CD14-positive monocyte (primary cell): ENCODE measurements at regions of chr22 and their contacts with region 1.

Region 1: GRCh38 chr22:38353142-38353629 is 36.0 kb upstream of the CSNK1E start:
- DNase-seq: peak; percentile 27 to 60 (median 58)
- H3K4me3 ChIP-seq: no peak overlapping the region
- H3K4me3 Mint-ChIP-seq: no peak overlapping the region
- H3K27ac ChIP-seq: no peak overlapping the region
- H3K27ac Mint-ChIP-seq: no peak overlapping the region
- H3K4me1 ChIP-seq: no peaks in the 10 kb centered on the region
- H3K4me1 Mint-ChIP-seq: no peaks in the 10 kb centered on the region
- H3K27me3 ChIP-seq: no peaks in the 10 kb centered on the region
- H3K27me3 Mint-ChIP-seq: peaks cover 5 to 10% (median 10%) of the 10 kb centered on the region in 3 donors
- CTCF ChIP-seq: peak; percentile 95

Region 2: DNA sequence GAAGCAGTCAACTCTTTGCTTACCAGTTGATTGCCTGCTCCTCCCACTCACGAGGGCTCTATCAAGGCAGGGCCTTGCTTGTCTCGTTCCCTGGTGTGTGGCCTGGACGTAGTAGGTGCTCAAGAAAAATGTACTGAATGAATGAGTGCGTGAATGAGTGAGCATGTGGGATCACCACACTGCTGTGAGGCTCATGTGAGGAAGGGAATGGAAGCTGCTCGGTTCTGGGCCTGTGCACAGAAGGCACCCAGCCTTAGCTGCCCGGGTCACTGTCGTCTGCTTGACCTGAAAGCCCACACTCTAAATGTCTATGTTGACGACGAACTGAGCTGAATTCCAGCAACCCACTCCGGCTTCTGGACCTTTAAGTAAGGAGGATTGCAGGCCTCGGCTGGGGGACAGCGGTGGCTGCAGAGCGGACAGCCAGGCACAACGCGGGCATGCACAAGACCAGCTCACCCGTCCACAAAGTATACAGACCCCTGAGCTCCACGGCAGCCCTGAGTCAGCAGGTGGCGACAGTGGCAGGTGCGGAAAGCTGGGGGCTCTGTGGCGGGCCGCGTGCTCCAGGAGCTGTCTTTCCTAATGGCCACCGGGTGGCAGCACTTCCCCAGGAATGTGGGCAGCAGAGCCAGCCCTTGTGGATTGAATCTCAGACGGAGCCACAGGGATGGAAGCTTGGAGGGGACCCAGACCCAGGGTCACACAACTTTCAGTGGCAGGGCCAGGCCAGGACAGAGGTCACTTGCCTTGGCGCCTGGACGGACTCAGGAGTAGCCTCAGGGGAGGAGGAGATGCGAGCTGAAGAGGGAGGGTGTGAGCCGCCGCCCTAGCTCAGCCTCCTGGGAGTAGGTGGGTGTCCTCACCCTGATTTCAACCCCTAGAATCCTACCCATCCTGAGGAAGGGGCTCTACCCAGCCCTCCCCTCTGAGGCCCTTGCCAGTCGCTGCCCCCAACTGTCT is 301.0 kb before region 1 on chr22:
- intact Hi-C with region 1: loop called (anchors 2 to 5 kb)
- DNase-seq: peak; percentile 60 to 75 (median 69)
- H3K4me3 ChIP-seq: no peak overlapping the region
- H3K4me3 Mint-ChIP-seq: no peak overlapping the region
- H3K27ac ChIP-seq: no peak overlapping the region
- H3K27ac Mint-ChIP-seq: no peak overlapping the region
- H3K4me1 ChIP-seq: peaks cover 9% of the 10 kb centered on the region in 2 donors
- H3K4me1 Mint-ChIP-seq: peaks cover 13% of the 10 kb centered on the region
- H3K27me3 ChIP-seq: peaks cover 0 to 3% of the 10 kb centered on the region in 2 donors
- H3K27me3 Mint-ChIP-seq: peaks cover 16 to 26% (median 19%) of the 10 kb centered on the region in 3 donors
- CTCF ChIP-seq: peak; percentile 94

Region 3: DNA sequence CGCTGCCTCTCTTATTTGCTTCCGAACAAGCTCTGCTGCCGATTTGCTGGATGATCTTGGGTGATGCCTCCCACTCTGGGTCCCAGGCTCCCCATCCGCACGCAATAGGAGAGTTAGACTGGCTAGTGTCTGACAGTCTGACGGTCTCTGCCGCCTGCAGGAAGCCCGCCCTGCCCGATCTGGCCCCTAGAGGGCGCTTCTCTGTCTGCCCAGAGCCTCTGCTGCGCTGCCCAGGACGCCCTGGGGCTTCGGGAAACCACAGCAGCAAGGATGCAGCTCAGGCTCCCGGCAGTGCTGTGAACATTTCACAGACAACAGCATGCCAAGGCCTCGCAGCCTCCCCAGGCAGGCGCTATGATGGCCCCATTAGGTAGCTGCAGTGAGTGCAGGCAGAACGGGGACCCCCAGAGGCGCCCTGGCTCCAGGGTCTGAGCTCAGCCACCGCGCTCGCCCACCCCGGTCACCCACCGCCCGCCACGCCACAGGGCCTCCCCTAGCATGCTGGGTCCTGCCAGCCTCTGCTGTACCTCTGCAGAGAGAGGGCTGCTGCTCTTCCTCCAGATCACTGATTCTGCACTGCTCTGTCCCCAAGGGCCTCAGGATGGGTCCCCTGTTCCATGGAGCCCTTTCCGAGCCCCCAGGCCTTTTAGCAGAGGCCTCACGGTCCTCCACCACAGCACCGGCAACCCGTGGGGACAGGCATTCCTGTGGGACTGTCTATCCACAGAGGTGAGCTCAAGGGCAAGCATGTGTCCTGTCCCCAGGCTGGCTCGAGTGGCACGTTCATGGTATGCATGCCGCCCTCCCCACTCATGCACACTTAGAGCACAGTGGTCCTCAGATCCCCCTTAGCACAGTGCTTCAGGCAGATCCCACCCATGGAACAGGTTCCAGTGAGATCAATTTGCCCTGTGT is 238.4 kb before region 1 on chr22:
- intact Hi-C with region 1: loop called (anchors 5 kb)
- DNase-seq: peak; percentile 67 to 77 (median 73)
- H3K4me3 ChIP-seq: no peak overlapping the region
- H3K4me3 Mint-ChIP-seq: no peak overlapping the region
- H3K27ac ChIP-seq: no peak overlapping the region
- H3K27ac Mint-ChIP-seq: no peak overlapping the region
- H3K4me1 ChIP-seq: no peaks in the 10 kb centered on the region
- H3K4me1 Mint-ChIP-seq: no peaks in the 10 kb centered on the region
- H3K27me3 ChIP-seq: no peaks in the 10 kb centered on the region
- H3K27me3 Mint-ChIP-seq: peaks cover 1% of the 10 kb centered on the region in 3 donors
- CTCF ChIP-seq: peak; percentile 87

Region 4: GRCh38 chr22:38298312-38299000 is 54.7 kb before region 1 on chr22:
- intact Hi-C with region 1: loop called (anchors 5 kb)
- DNase-seq: peak in 2 of 3 donors; percentile 21 to 23
- H3K4me3 ChIP-seq: no peak overlapping the region
- H3K4me3 Mint-ChIP-seq: no peak overlapping the region
- H3K27ac ChIP-seq: no peak overlapping the region
- H3K27ac Mint-ChIP-seq: peak overlapping the region in 3 of 7 donors; percentile 19 to 57 (median 30)
- H3K4me1 ChIP-seq: no peaks in the 10 kb centered on the region
- H3K4me1 Mint-ChIP-seq: no peaks in the 10 kb centered on the region
- H3K27me3 ChIP-seq: no peaks in the 10 kb centered on the region
- H3K27me3 Mint-ChIP-seq: peaks cover 0 to 1% (median 0%) of the 10 kb centered on the region in 3 donors
- CTCF ChIP-seq: peak; percentile 75

Region 5: DNA sequence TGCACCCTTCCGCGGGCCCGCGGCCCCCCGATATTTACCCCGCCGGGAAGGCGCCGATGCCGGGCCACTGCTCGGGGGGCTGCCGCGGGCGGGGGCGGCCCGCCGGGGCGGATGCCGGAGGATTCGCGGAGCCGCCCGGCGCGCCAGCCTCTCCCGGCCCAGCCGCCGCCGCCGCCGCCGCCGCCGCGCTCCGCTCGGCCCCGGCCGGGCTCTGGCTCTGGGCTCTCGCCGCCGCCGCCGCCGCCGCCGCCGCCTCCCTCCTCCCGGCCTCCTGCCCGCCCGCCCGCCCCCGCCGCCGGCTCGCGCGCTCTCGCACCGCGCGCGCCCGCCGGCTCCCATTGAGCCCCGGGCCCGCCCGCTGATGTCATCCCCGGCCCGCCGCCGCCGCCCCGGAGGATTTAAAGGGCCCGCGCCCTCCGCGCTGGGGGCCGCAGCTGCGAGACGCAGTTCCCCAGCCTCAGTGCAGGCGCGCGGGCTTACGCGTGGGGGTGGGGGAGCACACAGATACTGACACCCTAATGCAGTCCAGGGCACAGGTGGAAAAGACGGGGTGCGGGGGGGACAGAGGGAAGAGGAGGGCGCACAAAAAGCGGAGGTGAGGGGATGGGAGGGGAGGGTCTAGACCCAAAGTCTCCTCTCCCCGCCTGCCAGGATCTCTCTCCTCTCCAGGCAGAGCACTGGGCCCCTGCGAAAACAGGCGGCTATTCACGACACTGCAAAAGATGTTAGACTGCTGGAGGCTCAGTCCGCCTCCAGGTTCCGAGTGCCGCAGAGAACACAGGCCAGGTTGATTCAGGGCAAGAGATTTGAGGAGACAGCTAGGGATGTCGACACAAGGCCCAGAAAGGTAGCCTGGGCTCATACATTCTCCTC is 35.8 kb before region 1 on chr22 and contains the start of gene CSNK1E:
- intact Hi-C with region 1: loop called in 1 of 2 experiments (anchors 5 kb)
- DNase-seq: peak; percentile 23 to 54 (median 43)
- H3K4me3 ChIP-seq: peak within 1 kb of the TSS; percentile 57 to 79 (median 73)
- H3K4me3 Mint-ChIP-seq: peak within 1 kb of the TSS; percentile 87 to 89
- H3K27ac ChIP-seq: peak within 1 kb of the TSS; percentile 66 to 69
- H3K27ac Mint-ChIP-seq: peak within 1 kb of the TSS; percentile 77 to 89 (median 87)
- H3K4me1 ChIP-seq: peaks cover 34 to 45% of the 10 kb centered on the region in 2 donors
- H3K4me1 Mint-ChIP-seq: peaks cover 52% of the 10 kb centered on the region
- H3K27me3 ChIP-seq: no peaks in the 10 kb centered on the region
- H3K27me3 Mint-ChIP-seq: peaks cover 13 to 20% (median 18%) of the 10 kb centered on the region in 3 donors
- CTCF ChIP-seq: no peak
- polyA plus RNA-seq, gene CSNK1E: 1.9 to 44.7 (median 3.1) TPM

Region 6: DNA sequence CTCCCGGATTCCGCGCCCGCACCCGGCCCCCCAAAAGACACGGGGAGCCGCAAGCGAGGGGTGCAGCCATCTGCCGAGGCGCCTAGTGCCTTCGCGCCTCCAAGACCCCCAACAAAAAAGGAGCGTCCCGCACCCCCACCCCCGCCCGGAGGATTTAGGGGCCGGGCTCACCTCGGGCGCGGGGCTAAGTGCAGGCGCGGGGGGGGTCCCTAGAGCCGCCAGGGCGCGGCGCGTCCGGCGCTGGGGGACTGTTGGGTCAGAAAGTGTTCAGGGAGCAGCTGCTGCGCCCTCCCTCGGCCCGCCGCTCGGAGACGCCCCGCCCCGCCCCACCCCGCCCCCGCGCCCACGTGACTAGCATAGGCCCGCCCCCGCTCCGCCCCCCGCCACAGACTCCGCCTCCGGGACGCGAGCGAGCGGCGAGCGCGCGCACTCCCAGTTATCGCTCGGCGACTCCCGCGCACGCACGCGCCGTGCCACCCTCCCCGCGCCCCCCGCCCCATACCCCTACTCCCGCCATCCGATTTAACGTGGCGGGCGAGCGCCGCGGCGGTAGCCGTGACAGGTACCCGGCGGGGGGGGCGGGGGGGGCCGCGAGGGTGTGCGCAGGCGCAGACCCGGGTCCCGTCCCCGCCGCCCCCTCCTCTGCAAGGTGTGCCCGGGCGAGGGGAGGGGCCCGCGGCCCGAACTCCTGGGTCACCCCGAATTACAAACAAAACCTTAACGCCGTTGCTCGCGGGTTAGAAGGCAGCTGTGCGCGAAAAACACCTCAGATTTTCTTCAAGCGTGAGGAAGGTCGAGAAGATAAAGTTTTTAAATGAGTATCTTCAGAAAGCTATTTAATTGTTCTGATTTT is 45.6 kb after region 1 on chr22:
- intact Hi-C with region 1: no loop called
- DNase-seq: peak; percentile 66 to 79 (median 66)
- H3K4me3 ChIP-seq: peak overlapping the region; percentile 87 to 97 (median 87)
- H3K4me3 Mint-ChIP-seq: peak overlapping the region; percentile 82 to 91
- H3K27ac ChIP-seq: peak overlapping the region; percentile 54 to 77
- H3K27ac Mint-ChIP-seq: peak overlapping the region; percentile 33 to 91 (median 80)
- H3K4me1 ChIP-seq: peaks cover 49 to 66% of the 10 kb centered on the region in 2 donors
- H3K4me1 Mint-ChIP-seq: peaks cover 63% of the 10 kb centered on the region
- H3K27me3 ChIP-seq: no peaks in the 10 kb centered on the region
- H3K27me3 Mint-ChIP-seq: peaks cover 0 to 2% (median 0%) of the 10 kb centered on the region in 3 donors
- CTCF ChIP-seq: no peak